ENCODE measurements at regions of chr6 and their contacts with region 1.

Region 1: GRCh38 chr6:107657755-107658461 is 166.2 kb downstream of the SCML4 start:
- DNase-seq: peak; percentile 77
- H3K4me3 ChIP-seq: peak overlapping the region; percentile 36 to 55
- H3K27ac ChIP-seq: peak overlapping the region; percentile 24 to 78; a peak in 3 of 4 replicates
- H3K4me1 ChIP-seq: peaks cover 0 to 53% of the 10 kb centered on the region in 2 experiments; a peak in 2 of 4 replicates
- H3K27me3 ChIP-seq: no peaks in the 10 kb centered on the region
- CTCF ChIP-seq: peak; percentile 45
- EP300 ChIP-seq: no peak
- RAD21 ChIP-seq: 0 out of 2 replicates have a peak, but pooled peaks have one; percentile 17

Region 2: DNA sequence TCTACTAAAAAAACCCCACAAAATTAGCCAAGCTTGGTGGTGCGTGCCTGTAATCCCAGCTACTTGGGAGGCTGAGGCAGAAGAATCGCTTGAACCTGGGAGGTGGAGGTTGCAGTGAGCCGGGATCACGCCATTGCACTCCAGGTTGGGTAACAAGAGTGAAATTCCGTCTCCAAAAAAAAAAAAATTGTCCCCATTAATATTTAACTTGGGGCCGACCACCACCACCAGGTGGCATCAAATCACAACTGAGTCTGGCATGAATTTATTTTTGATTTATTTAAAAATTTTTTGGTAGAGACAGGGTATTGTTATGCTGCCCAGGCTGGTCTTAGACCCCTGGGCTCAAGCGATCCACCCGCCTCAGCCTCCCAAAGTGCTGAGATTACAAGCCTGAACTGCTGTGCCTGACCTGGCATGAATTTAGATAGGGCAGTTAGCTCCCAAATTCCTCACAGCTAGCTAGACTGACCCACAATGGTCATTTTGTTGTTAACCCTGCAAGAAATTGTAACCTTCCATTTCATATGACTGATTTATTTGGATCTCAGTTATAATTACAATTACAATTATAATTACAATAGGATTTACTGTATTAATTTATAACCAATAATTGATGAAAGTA is 525.5 kb before region 1 on chr6:
- CTCF ChIA-PET with region 1: interaction called, 15 read pairs
- POLR2A ChIA-PET with region 1: no interaction called
- DNase-seq: peak; percentile 55
- H3K4me3 ChIP-seq: no peak overlapping the region
- H3K27ac ChIP-seq: no peak overlapping the region
- H3K4me1 ChIP-seq: peaks cover 0 to 2% of the 10 kb centered on the region in 2 experiments; a peak in 1 of 4 replicates
- H3K27me3 ChIP-seq: no peaks in the 10 kb centered on the region
- CTCF ChIP-seq: peak; percentile 71
- EP300 ChIP-seq: no peak
- RAD21 ChIP-seq: peak; percentile 72

Region 3: DNA sequence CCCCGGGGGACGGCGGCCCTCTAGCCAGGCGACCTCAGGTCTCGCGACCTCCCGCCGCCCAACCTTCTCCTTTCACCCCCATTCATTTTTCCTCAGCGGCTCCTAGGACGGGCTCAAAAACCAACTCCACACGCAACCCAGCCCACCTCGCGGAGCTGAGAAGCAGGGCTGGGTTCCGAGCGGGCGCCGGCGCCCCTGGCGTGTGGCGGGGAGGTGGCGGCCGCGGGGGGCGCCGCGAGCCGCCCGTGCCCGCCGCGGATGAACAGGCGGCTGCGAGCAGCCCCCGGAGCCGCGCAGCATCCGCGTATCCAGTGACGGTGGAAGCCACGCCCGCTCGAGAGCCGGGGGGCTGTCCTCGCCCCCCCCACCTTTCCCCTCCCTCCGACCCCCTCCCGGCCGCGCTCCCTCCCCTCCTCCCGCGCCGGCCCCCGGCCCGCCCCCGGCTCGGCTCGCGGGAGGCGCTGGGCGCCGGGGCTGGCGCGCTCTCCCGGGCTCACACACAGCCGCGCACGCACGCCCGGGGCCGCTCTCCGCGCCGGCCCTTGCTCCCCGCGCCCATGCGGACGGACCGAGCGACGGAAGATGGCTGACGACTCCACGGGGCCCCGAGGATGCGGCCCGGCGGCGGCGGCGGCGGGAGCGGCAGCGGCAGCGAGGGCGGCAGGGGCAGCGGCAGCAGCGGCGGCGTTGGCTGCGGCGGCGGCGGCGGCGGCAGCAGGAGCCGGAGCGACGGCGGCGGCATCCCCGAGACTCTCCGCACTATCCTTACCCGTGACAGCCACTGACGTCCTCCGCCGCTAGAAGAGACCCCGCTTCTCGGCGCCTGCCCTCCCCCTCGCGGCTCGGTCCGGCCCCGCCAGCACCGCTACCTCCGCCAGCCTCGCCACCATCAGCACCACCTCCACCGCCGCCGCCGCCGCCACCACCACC is 168.0 kb before region 1 on chr6 and contains the start of gene SOBP:
- CTCF ChIA-PET with region 1: interaction called, 16 read pairs
- POLR2A ChIA-PET with region 1: interaction called, 6 read pairs
- DNase-seq: peak; percentile 96
- H3K4me3 ChIP-seq: peak within 1 kb of the TSS; percentile 59 to 83
- H3K27ac ChIP-seq: peak within 1 kb of the TSS; percentile 40 to 81; a peak in 3 of 4 replicates
- H3K4me1 ChIP-seq: peaks cover 13 to 23% of the 10 kb centered on the region in 2 experiments
- H3K27me3 ChIP-seq: no peaks in the 10 kb centered on the region
- CTCF ChIP-seq: no peak; the same call in 1 of the 2 replicates
- EP300 ChIP-seq: no peak
- RAD21 ChIP-seq: no peak
- polyA plus RNA-seq, gene SOBP: 0.21 and 0.61 TPM in 2 replicates

Region 4: DNA sequence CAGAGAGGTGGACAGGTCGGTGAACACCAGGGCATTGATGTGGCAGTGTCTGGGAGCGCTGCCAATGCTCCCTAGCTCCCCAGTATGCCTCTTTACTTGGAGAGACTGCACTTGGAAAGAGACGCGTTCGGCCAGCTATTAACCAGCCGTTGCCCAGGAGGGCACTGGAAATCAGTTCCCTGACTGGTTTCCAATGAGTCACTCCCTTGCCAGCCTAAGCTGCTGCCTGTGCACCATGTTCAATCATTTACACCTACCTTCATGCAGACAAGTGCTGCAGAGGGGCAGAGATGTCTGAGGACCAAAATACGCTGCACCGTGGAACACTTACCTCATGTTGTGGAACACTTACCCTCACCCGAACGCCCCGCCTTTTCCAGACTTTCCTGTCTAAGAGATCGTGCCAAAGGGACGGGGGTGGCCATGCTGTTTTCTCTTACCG is 16.4 kb before region 1 on chr6:
- CTCF ChIA-PET with region 1: interaction called, 12 read pairs
- POLR2A ChIA-PET with region 1: no interaction called
- DNase-seq: no peak
- H3K4me3 ChIP-seq: no peak overlapping the region
- H3K27ac ChIP-seq: no peak overlapping the region; a peak in 1 of 4 replicates
- H3K4me1 ChIP-seq: peaks cover 0 to 17% of the 10 kb centered on the region in 2 experiments; a peak in 1 of 4 replicates
- H3K27me3 ChIP-seq: no peaks in the 10 kb centered on the region
- CTCF ChIP-seq: no peak
- EP300 ChIP-seq: no peak
- RAD21 ChIP-seq: no peak

Region 5: GRCh38 chr6:107674995-107675738 is 17.3 kb after region 1 on chr6:
- CTCF ChIA-PET with region 1: interaction called, 64 read pairs
- POLR2A ChIA-PET with region 1: interaction called, 3 read pairs
- DNase-seq: peak; percentile 83
- H3K4me3 ChIP-seq: no peak overlapping the region; a peak in 1 of 4 replicates
- H3K27ac ChIP-seq: peak overlapping the region in 1 of 2 experiments; percentile 64; a peak in 1 of 4 replicates
- H3K4me1 ChIP-seq: peaks cover 0 to 22% of the 10 kb centered on the region in 2 experiments; a peak in 2 of 4 replicates
- H3K27me3 ChIP-seq: no peaks in the 10 kb centered on the region
- CTCF ChIP-seq: peak; percentile 83
- EP300 ChIP-seq: no peak
- RAD21 ChIP-seq: peak; percentile 86

Region 6: DNA sequence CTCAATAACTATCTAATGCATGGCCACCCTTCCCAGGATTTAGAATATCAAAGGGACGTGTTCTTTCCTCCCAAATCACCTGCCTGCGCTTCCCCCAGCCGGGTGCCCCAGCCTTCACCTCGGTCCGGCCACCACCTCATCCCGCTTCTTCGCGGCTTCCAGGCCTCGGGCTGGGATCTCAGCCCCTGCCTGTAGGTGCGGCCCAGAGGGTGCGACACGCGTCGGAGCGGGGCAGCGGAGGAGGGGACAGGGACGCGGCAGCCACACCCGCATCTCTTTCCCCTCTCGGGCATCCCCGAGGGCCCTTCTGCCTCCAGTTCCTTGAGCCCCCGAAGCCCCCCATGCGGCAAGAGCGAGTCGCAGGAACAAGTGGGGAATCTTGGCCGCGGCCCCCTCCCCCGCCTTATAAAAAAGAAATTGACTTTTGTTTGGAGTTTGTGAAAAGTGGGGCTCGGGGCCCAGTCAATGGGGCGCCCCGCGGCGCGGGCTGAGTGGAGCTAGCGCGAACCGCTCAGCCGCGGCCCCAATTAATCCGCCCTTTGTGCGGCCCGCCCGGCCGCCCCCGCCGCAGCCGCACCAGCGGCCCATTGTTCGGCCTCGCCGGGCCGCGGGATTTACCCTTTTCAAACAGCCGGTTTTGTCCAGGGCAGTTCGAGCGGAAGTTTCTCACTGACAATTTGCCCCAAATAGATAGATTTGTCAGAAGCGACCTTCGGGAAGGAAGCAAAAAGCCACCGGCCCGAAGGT is 499.5 kb after region 1 on chr6:
- CTCF ChIA-PET with region 1: no interaction called
- POLR2A ChIA-PET with region 1: no interaction called
- DNase-seq: peak; percentile 73
- H3K4me3 ChIP-seq: peak overlapping the region; percentile 43 to 58
- H3K27ac ChIP-seq: no peak overlapping the region
- H3K4me1 ChIP-seq: peaks cover 0 to 10% of the 10 kb centered on the region in 2 experiments; a peak in 1 of 4 replicates
- H3K27me3 ChIP-seq: peaks cover 66% of the 10 kb centered on the region
- CTCF ChIP-seq: no peak
- EP300 ChIP-seq: no peak
- RAD21 ChIP-seq: no peak

Measured in SK-N-SH (cell line).